CD14-positive monocyte (primary cell): ENCODE measurements at regions of chr10 and their contacts with region 1.

Region 1: GRCh38 chr10:23438550-23439441 is at the start of gene OTUD1:
- DNase-seq: peak; percentile 95
- H3K4me3 ChIP-seq: peak within 1 kb of the TSS; percentile 93 to 99 (median 94)
- H3K4me3 Mint-ChIP-seq: peak within 1 kb of the TSS; percentile 96 to 99
- H3K27ac ChIP-seq: peak within 1 kb of the TSS; percentile 43 to 87
- H3K27ac Mint-ChIP-seq: peak within 1 kb of the TSS; percentile 88 to 98 (median 95)
- H3K4me1 ChIP-seq: peaks cover 47 to 69% of the 10 kb centered on the region in 2 donors
- H3K4me1 Mint-ChIP-seq: peaks cover 68% of the 10 kb centered on the region
- H3K27me3 ChIP-seq: no peaks in the 10 kb centered on the region
- H3K27me3 Mint-ChIP-seq: peaks cover 0 to 3% (median 0%) of the 10 kb centered on the region in 3 donors
- CTCF ChIP-seq: no peak
- polyA plus RNA-seq, gene OTUD1: 18.8 to 81.0 (median 24.5) TPM

Region 2: GRCh38 chr10:21533467-21534279 is 1905.1 kb before region 1 on chr10 and contains the start of gene MLLT10:
- intact Hi-C with region 1: loop called in 1 of 2 experiments (anchors 10 kb)
- DNase-seq: peak; percentile 90 to 91 (median 91)
- H3K4me3 ChIP-seq: peak within 1 kb of the TSS; percentile 55 to 93 (median 91)
- H3K4me3 Mint-ChIP-seq: peak within 1 kb of the TSS; percentile 95 to 98
- H3K27ac ChIP-seq: peak within 1 kb of the TSS; percentile 81 to 82
- H3K27ac Mint-ChIP-seq: peak within 1 kb of the TSS; percentile 75 to 95 (median 92)
- H3K4me1 ChIP-seq: peaks cover 15 to 21% of the 10 kb centered on the region in 2 donors
- H3K4me1 Mint-ChIP-seq: peaks cover 25% of the 10 kb centered on the region
- H3K27me3 ChIP-seq: no peaks in the 10 kb centered on the region
- H3K27me3 Mint-ChIP-seq: no peaks in the 10 kb centered on the region
- CTCF ChIP-seq: peak; percentile 23
- polyA plus RNA-seq, gene MLLT10: 4.9 to 39.1 (median 7.5) TPM

Region 3: GRCh38 chr10:23331567-23332290 is 107.1 kb before region 1 on chr10:
- intact Hi-C with region 1: loop called in 1 of 2 experiments (anchors 5 kb)
- DNase-seq: peak; percentile 49 to 80 (median 63)
- H3K4me3 ChIP-seq: no peak overlapping the region
- H3K4me3 Mint-ChIP-seq: no peak overlapping the region
- H3K27ac ChIP-seq: no peak overlapping the region
- H3K27ac Mint-ChIP-seq: peak overlapping the region in 2 of 7 donors; percentile 25 to 70
- H3K4me1 ChIP-seq: no peaks in the 10 kb centered on the region
- H3K4me1 Mint-ChIP-seq: no peaks in the 10 kb centered on the region
- H3K27me3 ChIP-seq: no peaks in the 10 kb centered on the region
- H3K27me3 Mint-ChIP-seq: peaks cover 10 to 16% (median 11%) of the 10 kb centered on the region in 3 donors
- CTCF ChIP-seq: no peak

Region 4: GRCh38 chr10:23368816-23369640 is 69.8 kb before region 1 on chr10:
- intact Hi-C with region 1: no loop called
- DNase-seq: no peak
- H3K4me3 ChIP-seq: no peak overlapping the region
- H3K4me3 Mint-ChIP-seq: peak overlapping the region in 1 of 2 donors; percentile 31
- H3K27ac ChIP-seq: no peak overlapping the region
- H3K27ac Mint-ChIP-seq: no peak overlapping the region
- H3K4me1 ChIP-seq: peaks cover under 1 to 2% of the 10 kb centered on the region in 2 donors
- H3K4me1 Mint-ChIP-seq: peaks cover 14% of the 10 kb centered on the region
- H3K27me3 ChIP-seq: peaks cover 0 to 7% of the 10 kb centered on the region in 2 donors
- H3K27me3 Mint-ChIP-seq: peaks cover 7 to 21% (median 12%) of the 10 kb centered on the region in 3 donors
- CTCF ChIP-seq: no peak

Region 5: DNA sequence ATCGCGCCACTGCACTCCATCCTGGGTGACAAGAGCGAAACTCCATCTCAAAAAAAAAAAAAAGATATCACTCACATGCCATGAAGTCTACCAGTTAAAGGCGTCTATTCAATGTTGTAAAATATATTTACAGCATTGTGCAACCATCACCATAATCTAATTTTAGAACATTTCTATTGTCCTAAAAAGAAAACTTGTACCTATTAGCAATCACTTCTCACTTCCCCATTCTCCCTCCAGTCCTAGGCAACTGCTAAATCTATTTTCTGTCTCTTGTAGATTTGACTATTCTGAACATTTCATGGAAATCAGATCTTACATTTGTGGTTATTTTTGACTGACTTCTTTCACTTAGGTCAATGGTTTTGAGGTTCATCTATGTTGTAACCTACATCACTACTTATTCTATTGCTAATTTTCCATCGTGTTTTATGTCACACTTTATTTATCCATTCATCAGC is 25.1 kb before region 1 on chr10:
- intact Hi-C with region 1: loop called in 1 of 2 experiments (anchors 2 kb)
- DNase-seq: peak; percentile 82 to 95 (median 91)
- H3K4me3 ChIP-seq: peak overlapping the region in 1 of 3 experiments; percentile 39
- H3K4me3 Mint-ChIP-seq: peak overlapping the region; percentile 75 to 78
- H3K27ac ChIP-seq: peak overlapping the region; percentile 77 to 87
- H3K27ac Mint-ChIP-seq: peak overlapping the region; percentile 89 to 99 (median 96)
- H3K4me1 ChIP-seq: peaks cover 32 to 33% of the 10 kb centered on the region in 2 donors
- H3K4me1 Mint-ChIP-seq: peaks cover 34% of the 10 kb centered on the region
- H3K27me3 ChIP-seq: no peaks in the 10 kb centered on the region
- H3K27me3 Mint-ChIP-seq: peaks cover 0 to 6% (median 1%) of the 10 kb centered on the region in 3 donors
- CTCF ChIP-seq: no peak

Region 6: GRCh38 chr10:23516530-23516929 is 77.7 kb after region 1 on chr10:
- intact Hi-C with region 1: loop called in 1 of 2 experiments (anchors 10 kb)
- DNase-seq: peak; percentile 19 to 46 (median 39)
- H3K4me3 ChIP-seq: no peak overlapping the region
- H3K4me3 Mint-ChIP-seq: no peak overlapping the region
- H3K27ac ChIP-seq: no peak overlapping the region
- H3K27ac Mint-ChIP-seq: no peak overlapping the region
- H3K4me1 ChIP-seq: peaks cover 16 to 24% of the 10 kb centered on the region in 2 donors
- H3K4me1 Mint-ChIP-seq: peaks cover 29% of the 10 kb centered on the region
- H3K27me3 ChIP-seq: no peaks in the 10 kb centered on the region
- H3K27me3 Mint-ChIP-seq: peaks cover 4 to 10% (median 6%) of the 10 kb centered on the region in 3 donors
- CTCF ChIP-seq: peak; percentile 65